IMR-90 (cell line): ENCODE measurements at regions of chr5 and their contacts with region 1.

Region 1: GRCh38 chr5:90571147-90571773 is 12.7 kb downstream of the ADGRV1 start:
- DNase-seq: no peak
- ATAC-seq: no peak
- H3K4me3 ChIP-seq: no peak overlapping the region
- H3K27ac ChIP-seq: no peak overlapping the region
- H3K4me1 ChIP-seq: no peaks in the 10 kb centered on the region
- H3K27me3 ChIP-seq: no peaks in the 10 kb centered on the region
- CTCF ChIP-seq: no peak
- POLR2A ChIP-seq: no peak
- RAD21 ChIP-seq: no peak

Region 2: DNA sequence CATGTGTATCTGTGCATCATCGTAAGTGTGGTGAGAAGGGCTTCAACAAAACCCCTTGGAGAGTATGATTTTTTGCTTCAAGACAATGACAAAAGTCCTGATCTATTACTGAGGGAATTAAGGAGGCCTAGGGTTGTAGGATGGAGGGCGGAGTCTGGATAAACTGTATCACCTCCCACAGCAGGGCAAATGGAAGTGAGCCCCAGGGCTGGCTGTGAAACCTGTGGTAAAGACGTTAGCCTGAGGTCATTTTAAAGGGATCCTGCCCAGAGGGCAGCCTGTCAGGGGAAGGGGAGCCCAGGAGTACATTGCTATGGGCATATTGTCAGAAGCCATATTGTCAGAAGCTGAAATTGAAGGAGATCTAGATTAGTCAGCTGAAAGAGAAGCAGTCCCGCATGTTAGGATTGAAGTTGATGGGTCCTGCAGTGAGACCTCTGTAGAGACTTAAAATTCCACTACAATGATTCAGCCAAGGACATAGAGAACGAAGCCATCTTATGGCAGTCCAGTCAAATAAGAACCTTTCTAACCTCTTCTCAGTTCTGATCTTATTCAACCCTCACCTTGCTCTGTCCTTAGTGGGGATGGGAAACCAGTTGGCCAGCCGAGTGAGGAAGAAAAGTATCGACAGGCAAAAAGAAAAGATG is 14.2 kb after region 1 on chr5:
- CTCF ChIA-PET with region 1: no interaction called
- POLR2A ChIA-PET with region 1: interaction called, 18 read pairs
- dilution Hi-C with region 1: no loop called
- in situ Hi-C with region 1: no loop called
- intact Hi-C with region 1: no loop called
- DNase-seq: no peak
- ATAC-seq: no peak
- H3K4me3 ChIP-seq: no peak overlapping the region
- H3K27ac ChIP-seq: no peak overlapping the region
- H3K4me1 ChIP-seq: no peaks in the 10 kb centered on the region
- H3K27me3 ChIP-seq: no peaks in the 10 kb centered on the region
- CTCF ChIP-seq: no peak
- POLR2A ChIP-seq: no peak
- RAD21 ChIP-seq: no peak

Region 3: GRCh38 chr5:90700299-90700698 is 129.0 kb after region 1 on chr5:
- CTCF ChIA-PET with region 1: no interaction called
- POLR2A ChIA-PET with region 1: no interaction called
- dilution Hi-C with region 1: no loop called
- in situ Hi-C with region 1: no loop called
- intact Hi-C with region 1: no loop called
- DNase-seq: no peak
- ATAC-seq: no peak
- H3K4me3 ChIP-seq: no peak overlapping the region
- H3K27ac ChIP-seq: no peak overlapping the region
- H3K4me1 ChIP-seq: no peaks in the 10 kb centered on the region
- H3K27me3 ChIP-seq: no peaks in the 10 kb centered on the region
- CTCF ChIP-seq: no peak
- POLR2A ChIP-seq: no peak
- RAD21 ChIP-seq: no peak

Region 4: GRCh38 chr5:90793183-90793582 is 221.9 kb after region 1 on chr5:
- CTCF ChIA-PET with region 1: no interaction called
- POLR2A ChIA-PET with region 1: no interaction called
- dilution Hi-C with region 1: no loop called
- in situ Hi-C with region 1: no loop called
- intact Hi-C with region 1: no loop called
- DNase-seq: no peak
- ATAC-seq: no peak
- H3K4me3 ChIP-seq: no peak overlapping the region
- H3K27ac ChIP-seq: no peak overlapping the region
- H3K4me1 ChIP-seq: no peaks in the 10 kb centered on the region
- H3K27me3 ChIP-seq: no peaks in the 10 kb centered on the region
- CTCF ChIP-seq: no peak
- POLR2A ChIP-seq: no peak
- RAD21 ChIP-seq: no peak